A549 (cell line): ENCODE measurements at regions of chr15 and their contacts with region 1.

Region 1: DNA sequence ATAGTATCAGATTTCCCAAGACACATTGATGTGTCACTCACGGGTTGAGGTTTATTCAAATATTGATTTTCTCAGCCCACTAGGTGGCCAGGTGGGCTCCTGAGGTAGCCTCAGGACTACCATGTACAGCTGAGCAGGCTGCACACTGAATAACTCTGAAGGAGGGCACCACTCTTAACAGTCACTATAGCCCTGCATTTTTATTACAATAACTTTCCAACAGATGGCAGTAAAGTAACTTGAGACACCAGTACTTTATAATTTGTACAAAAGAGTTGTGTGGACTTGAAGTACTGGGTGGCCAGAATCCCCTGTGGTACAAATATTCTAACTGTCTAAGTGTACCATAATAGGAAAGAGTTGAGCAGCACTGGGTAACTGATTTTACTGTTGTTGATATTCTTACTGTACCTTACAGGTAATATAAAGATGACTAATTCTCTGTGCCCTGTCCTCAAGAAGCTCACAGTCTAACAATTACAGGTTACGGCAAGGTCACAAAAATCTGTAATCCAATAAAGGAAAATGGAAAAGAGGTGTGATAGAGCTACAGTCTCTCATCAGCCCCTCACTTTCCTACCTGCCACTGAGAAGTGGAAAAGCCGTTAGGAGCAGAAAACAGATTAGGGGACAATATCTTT is 76.0 kb downstream of the ETFA start:
- DNase-seq: peak; percentile 39 to 66
- ATAC-seq: peak; percentile 91 to 98
- H3K4me3 ChIP-seq: no peak overlapping the region
- H3K27ac ChIP-seq: no peak overlapping the region
- H3K4me1 ChIP-seq: no peaks in the 10 kb centered on the region
- CTCF ChIP-seq: peak; percentile 81
- EP300 ChIP-seq: no peak
- POLR2A ChIP-seq: no peak
- RAD21 ChIP-seq: peak; percentile 81 to 83

Region 2: GRCh38 chr15:76024021-76024768 is 211.1 kb before region 1 on chr15:
- CTCF ChIA-PET with region 1: no interaction called
- POLR2A ChIA-PET with region 1: no interaction called
- DNase-seq: no peak
- ATAC-seq: no peak
- H3K4me3 ChIP-seq: no peak overlapping the region
- H3K27ac ChIP-seq: no peak overlapping the region
- H3K4me1 ChIP-seq: no peaks in the 10 kb centered on the region
- CTCF ChIP-seq: no peak
- EP300 ChIP-seq: no peak
- POLR2A ChIP-seq: no peak
- RAD21 ChIP-seq: no peak

Region 3: GRCh38 chr15:76223521-76223920 is 11.8 kb before region 1 on chr15:
- CTCF ChIA-PET with region 1: interaction called, 12 read pairs
- POLR2A ChIA-PET with region 1: no interaction called
- DNase-seq: no peak
- ATAC-seq: no peak
- H3K4me3 ChIP-seq: no peak overlapping the region
- H3K27ac ChIP-seq: no peak overlapping the region
- H3K4me1 ChIP-seq: no peaks in the 10 kb centered on the region
- CTCF ChIP-seq: no peak
- EP300 ChIP-seq: no peak
- POLR2A ChIP-seq: no peak
- RAD21 ChIP-seq: no peak

Region 4: DNA sequence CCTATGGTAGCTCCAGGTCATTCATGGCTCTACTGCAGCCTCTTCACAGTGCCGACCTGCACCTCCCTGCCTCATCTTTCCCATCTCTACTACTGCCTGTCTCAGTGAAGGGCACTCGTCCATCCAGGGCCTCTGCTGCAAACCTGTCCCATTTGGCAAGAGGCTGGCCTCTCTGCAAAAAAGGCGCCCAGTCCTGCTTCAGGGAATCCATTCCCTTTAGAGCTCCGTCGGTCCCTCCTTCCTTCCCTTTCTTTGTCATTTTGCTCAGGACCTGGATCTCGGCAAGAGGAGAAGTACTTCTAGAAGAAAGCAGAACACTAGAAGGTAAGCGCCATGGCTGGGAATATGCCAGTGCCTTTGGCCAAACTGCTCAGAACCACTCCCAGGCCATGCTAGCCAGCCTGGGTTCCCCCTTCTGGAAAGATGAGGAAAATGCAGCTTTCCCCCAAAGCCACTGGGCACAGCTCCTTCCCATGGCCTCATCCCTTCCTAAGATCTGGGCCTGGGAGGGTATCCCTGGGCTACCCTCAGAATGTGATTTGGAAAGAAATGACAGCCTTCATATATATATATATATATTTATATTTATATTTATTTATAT is 94.9 kb after region 1 on chr15:
- CTCF ChIA-PET with region 1: interaction called, 39 read pairs
- POLR2A ChIA-PET with region 1: interaction called, 4 read pairs
- DNase-seq: peak; percentile 81 to 90
- ATAC-seq: peak; percentile 78 to 88
- H3K4me3 ChIP-seq: no peak overlapping the region
- H3K27ac ChIP-seq: peak overlapping the region; percentile 29 to 40; a peak in 4 of 6 replicates
- H3K4me1 ChIP-seq: peaks cover 48% of the 10 kb centered on the region
- CTCF ChIP-seq: peak; percentile 43
- EP300 ChIP-seq: no peak
- POLR2A ChIP-seq: no peak
- RAD21 ChIP-seq: peak; percentile 58 to 77

Region 5: GRCh38 chr15:76345880-76346668 is 110.8 kb after region 1 on chr15:
- CTCF ChIA-PET with region 1: interaction called, 10 read pairs
- POLR2A ChIA-PET with region 1: no interaction called
- DNase-seq: no peak
- ATAC-seq: no peak; a peak in 1 of 6 replicates
- H3K4me3 ChIP-seq: no peak overlapping the region
- H3K27ac ChIP-seq: no peak overlapping the region
- H3K4me1 ChIP-seq: peaks cover 9% of the 10 kb centered on the region; the same call in 2 of the 3 replicates
- CTCF ChIP-seq: no peak
- EP300 ChIP-seq: no peak
- POLR2A ChIP-seq: no peak
- RAD21 ChIP-seq: no peak